ENCODE measurements at regions of chr10 and their contacts with region 1.

Region 1: GRCh38 chr10:121994390-121994961 is 5.5 kb downstream of the TACC2 start:
- DNase-seq: no peak
- H3K4me3 Mint-ChIP-seq: no peak overlapping the region
- H3K27ac Mint-ChIP-seq: peak overlapping the region; percentile 66
- H3K4me1 Mint-ChIP-seq: peaks cover 24% of the 10 kb centered on the region
- H3K27me3 Mint-ChIP-seq: no peaks in the 10 kb centered on the region
- CTCF ChIP-seq: no peak

Region 2: GRCh38 chr10:121771966-121772365 is 222.5 kb before region 1 on chr10:
- CTCF ChIA-PET with region 1: no interaction called
- POLR2A ChIA-PET with region 1: no interaction called
- intact Hi-C with region 1: no loop called
- DNase-seq: no peak
- H3K4me3 Mint-ChIP-seq: no peak overlapping the region
- H3K27ac Mint-ChIP-seq: no peak overlapping the region
- H3K4me1 Mint-ChIP-seq: peaks cover 16% of the 10 kb centered on the region
- H3K27me3 Mint-ChIP-seq: no peaks in the 10 kb centered on the region
- CTCF ChIP-seq: no peak

Region 3: GRCh38 chr10:121831777-121832176 is 162.7 kb before region 1 on chr10:
- CTCF ChIA-PET with region 1: no interaction called
- POLR2A ChIA-PET with region 1: no interaction called
- intact Hi-C with region 1: no loop called
- DNase-seq: no peak
- H3K4me3 Mint-ChIP-seq: no peak overlapping the region
- H3K27ac Mint-ChIP-seq: no peak overlapping the region
- H3K4me1 Mint-ChIP-seq: no peaks in the 10 kb centered on the region
- H3K27me3 Mint-ChIP-seq: no peaks in the 10 kb centered on the region
- CTCF ChIP-seq: no peak

Region 4: GRCh38 chr10:121974535-121975294 is 19.8 kb before region 1 on chr10 and contains the start of gene NSMCE4A:
- CTCF ChIA-PET with region 1: interaction called, 12 read pairs
- POLR2A ChIA-PET with region 1: interaction called, 24 read pairs
- intact Hi-C with region 1: no loop called
- DNase-seq: peak; percentile 63
- H3K4me3 Mint-ChIP-seq: peak within 1 kb of the TSS; percentile 77
- H3K27ac Mint-ChIP-seq: peak within 1 kb of the TSS; percentile 16
- H3K4me1 Mint-ChIP-seq: peaks cover 13% of the 10 kb centered on the region
- H3K27me3 Mint-ChIP-seq: no peaks in the 10 kb centered on the region
- CTCF ChIP-seq: peak; percentile 59
- total RNA-seq, gene NSMCE4A: 24.5 and 30.2 TPM in 2 replicates

Region 5: GRCh38 chr10:122019414-122019975 is 25.0 kb after region 1 on chr10:
- CTCF ChIA-PET with region 1: interaction called, 3 read pairs
- POLR2A ChIA-PET with region 1: interaction called, 15 read pairs
- intact Hi-C with region 1: no loop called
- DNase-seq: peak; percentile 81
- H3K4me3 Mint-ChIP-seq: peak overlapping the region; percentile 68
- H3K27ac Mint-ChIP-seq: peak overlapping the region; percentile 86
- H3K4me1 Mint-ChIP-seq: peaks cover 21% of the 10 kb centered on the region
- H3K27me3 Mint-ChIP-seq: no peaks in the 10 kb centered on the region
- CTCF ChIP-seq: no peak

Measured in MCF 10A (cell line).